OCI-LY7 (cell line): ENCODE measurements at regions of chr14 and their contacts with region 1.

Region 1: GRCh38 chr14:59576332-59577294 is at the start of gene CCDC175:
- DNase-seq: peak; percentile 81
- H3K4me3 ChIP-seq: peak within 1 kb of the TSS; percentile 41
- H3K27ac ChIP-seq: no peak within 1 kb of the TSS
- H3K4me1 ChIP-seq: no peaks in the 10 kb centered on the region
- CTCF ChIP-seq: peak; percentile 88
- total RNA-seq, gene CCDC175: not detected in 2 replicates

Region 2: GRCh38 chr14:59028476-59029202 is 548.0 kb before region 1 on chr14:
- CTCF ChIA-PET with region 1: no interaction called
- POLR2A ChIA-PET with region 1: no interaction called
- intact Hi-C with region 1: loop called (anchors 1 kb)
- DNase-seq: peak; percentile 76
- H3K4me3 ChIP-seq: no peak overlapping the region
- H3K27ac ChIP-seq: no peak overlapping the region
- H3K4me1 ChIP-seq: no peaks in the 10 kb centered on the region
- CTCF ChIP-seq: peak; percentile 98

Region 3: GRCh38 chr14:59377991-59378601 is 198.5 kb before region 1 on chr14:
- CTCF ChIA-PET with region 1: no interaction called
- POLR2A ChIA-PET with region 1: no interaction called
- intact Hi-C with region 1: no loop called
- DNase-seq: no peak
- H3K4me3 ChIP-seq: no peak overlapping the region
- H3K27ac ChIP-seq: no peak overlapping the region
- H3K4me1 ChIP-seq: no peaks in the 10 kb centered on the region
- CTCF ChIP-seq: no peak

Region 4: GRCh38 chr14:59407246-59408010 is 169.2 kb before region 1 on chr14:
- CTCF ChIA-PET with region 1: no interaction called
- POLR2A ChIA-PET with region 1: no interaction called
- intact Hi-C with region 1: no loop called
- DNase-seq: no peak
- H3K4me3 ChIP-seq: no peak overlapping the region
- H3K27ac ChIP-seq: no peak overlapping the region
- H3K4me1 ChIP-seq: no peaks in the 10 kb centered on the region
- CTCF ChIP-seq: no peak

Region 5: GRCh38 chr14:59664741-59665140 is 88.1 kb after region 1 on chr14:
- CTCF ChIA-PET with region 1: no interaction called
- POLR2A ChIA-PET with region 1: no interaction called
- intact Hi-C with region 1: no loop called
- DNase-seq: no peak
- H3K4me3 ChIP-seq: no peak overlapping the region
- H3K27ac ChIP-seq: no peak overlapping the region
- H3K4me1 ChIP-seq: no peaks in the 10 kb centered on the region
- CTCF ChIP-seq: no peak